Activated CD4-positive, alpha-beta T cell treated with anti-CD3 and anti-CD28 coated beads for 36 hours (primary cell): ENCODE measurements at regions of chr9 and their contacts with region 1.

Region 1: GRCh38 chr9:34437006-34437925 is 21.1 kb downstream of the FAM219A start:
- DNase-seq: peak; percentile 77
- ATAC-seq: peak; percentile 96
- H3K4me3 Mint-ChIP-seq: no peak overlapping the region
- H3K27ac Mint-ChIP-seq: no peak overlapping the region
- H3K4me1 Mint-ChIP-seq: peaks cover 9% of the 10 kb centered on the region
- H3K27me3 Mint-ChIP-seq: no peaks in the 10 kb centered on the region

Region 2: DNA sequence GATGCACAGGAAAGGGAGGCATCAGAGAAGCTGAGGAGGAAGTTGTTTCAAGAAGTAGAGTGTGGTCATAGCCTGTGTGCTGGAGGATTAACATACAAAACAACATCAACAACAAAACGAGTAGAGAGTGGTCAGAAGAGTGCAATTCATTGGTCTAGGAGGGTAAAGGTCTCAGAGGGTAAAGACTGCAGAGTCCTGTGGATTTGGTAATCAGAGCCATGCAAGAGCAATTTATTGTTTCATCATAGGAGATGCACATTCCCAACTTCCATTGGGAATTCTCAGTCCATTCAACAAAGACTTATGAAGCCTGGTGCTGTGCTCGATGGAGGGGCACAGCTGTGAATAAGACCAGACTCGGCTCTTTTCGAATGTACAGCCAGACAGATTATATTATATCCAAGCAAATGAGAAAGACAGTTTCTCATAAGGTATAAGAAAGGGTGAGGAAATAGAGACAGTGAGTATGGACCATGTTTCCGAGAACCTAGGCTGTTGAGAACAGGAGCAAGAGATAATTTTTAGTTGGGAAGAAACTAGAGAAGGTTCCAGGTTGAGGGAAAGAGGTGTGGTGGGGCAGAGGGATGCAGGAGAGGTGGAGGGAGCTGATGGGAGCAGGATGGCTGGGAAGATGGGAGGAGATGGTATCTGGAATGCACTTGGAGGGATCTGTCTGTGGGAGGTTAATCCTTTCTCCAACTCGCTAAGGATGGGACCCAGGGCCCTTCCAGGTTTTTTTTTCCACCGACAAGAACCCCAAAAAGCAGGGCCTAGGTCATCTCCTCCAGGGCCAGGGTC is 52.7 kb before region 1 on chr9:
- CTCF ChIA-PET with region 1: interaction called, 3 read pairs
- POLR2A ChIA-PET with region 1: no interaction called
- intact Hi-C with region 1: loop called in 1 of 2 experiments (anchors 5 kb)
- DNase-seq: no peak
- ATAC-seq: no peak
- H3K4me3 Mint-ChIP-seq: no peak overlapping the region
- H3K27ac Mint-ChIP-seq: no peak overlapping the region
- H3K4me1 Mint-ChIP-seq: peaks cover 18% of the 10 kb centered on the region
- H3K27me3 Mint-ChIP-seq: no peaks in the 10 kb centered on the region

Region 3: GRCh38 chr9:34546834-34547827 is 109.9 kb after region 1 on chr9:
- CTCF ChIA-PET with region 1: interaction called, 9 read pairs
- POLR2A ChIA-PET with region 1: no interaction called
- intact Hi-C with region 1: loop called (anchors 1 to 2 kb)
- DNase-seq: peak; percentile 84
- ATAC-seq: peak; percentile 84
- H3K4me3 Mint-ChIP-seq: no peak overlapping the region
- H3K27ac Mint-ChIP-seq: no peak overlapping the region
- H3K4me1 Mint-ChIP-seq: no peaks in the 10 kb centered on the region
- H3K27me3 Mint-ChIP-seq: peaks cover 7% of the 10 kb centered on the region

Region 4: DNA sequence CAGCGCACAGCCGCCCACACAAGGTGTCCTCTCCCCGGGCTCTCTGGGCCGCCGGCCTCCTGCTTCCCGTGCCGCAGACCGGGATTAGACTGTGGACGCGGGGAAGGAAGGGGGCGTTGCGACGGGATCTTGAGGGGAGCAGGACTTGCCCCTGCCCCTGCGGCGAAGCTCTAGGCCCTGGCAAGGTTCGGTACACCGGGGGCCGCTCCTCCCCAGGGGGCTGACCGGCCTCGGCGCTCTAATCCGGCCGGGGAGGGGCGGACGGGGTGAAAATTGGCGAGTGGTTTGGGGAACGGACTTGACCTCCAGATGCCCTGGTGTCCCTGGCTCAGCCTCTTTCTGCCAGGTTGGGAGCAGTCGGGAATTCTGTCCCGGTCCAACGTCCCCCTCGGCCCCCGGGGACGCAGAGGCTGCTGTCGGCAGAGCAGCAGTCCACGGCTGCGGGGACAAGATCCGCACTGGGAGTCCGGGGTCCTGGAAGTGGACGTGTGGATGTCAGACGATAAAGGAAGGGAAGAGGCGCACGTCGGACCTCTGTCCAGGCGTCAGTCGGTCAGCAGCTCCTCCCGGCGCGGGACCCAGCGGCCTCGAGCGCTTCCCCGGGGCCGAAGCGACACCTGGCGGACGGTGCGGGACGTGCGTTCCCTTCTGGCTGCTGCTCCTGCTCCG is 154.1 kb after region 1 on chr9:
- CTCF ChIA-PET with region 1: interaction called, 10 read pairs
- POLR2A ChIA-PET with region 1: no interaction called
- intact Hi-C with region 1: loop called (anchors 1 kb)
- DNase-seq: peak; percentile 89
- ATAC-seq: peak; percentile 76
- H3K4me3 Mint-ChIP-seq: peak overlapping the region; percentile 57
- H3K27ac Mint-ChIP-seq: no peak overlapping the region
- H3K4me1 Mint-ChIP-seq: peaks cover 27% of the 10 kb centered on the region
- H3K27me3 Mint-ChIP-seq: peaks cover 66% of the 10 kb centered on the region